Heart right ventricle (tissue), 16 donors: ENCODE measurements at regions of chr2 and their contacts with region 1.

Region 1: GRCh38 chr2:237291138-237291792 is 122.7 kb downstream of the COL6A3 start:
- DNase-seq: peak; percentile 91 to 98
- ATAC-seq: peak; percentile 94 to 98 (median 96)
- H3K4me3 ChIP-seq: peak overlapping the region in 5 of 10 donors; percentile 1 to 24 (median 10)
- H3K27ac ChIP-seq: peak overlapping the region; percentile 71 to 92 (median 82)
- H3K4me1 ChIP-seq: peaks cover 0 to 40% (median 31%) of the 10 kb centered on the region in 9 donors
- H3K27me3 ChIP-seq: no peaks in the 10 kb centered on the region
- CTCF ChIP-seq: no peak

Region 2: GRCh38 chr2:237235383-237236095 is 55.7 kb before region 1 on chr2:
- intact Hi-C with region 1: loop called in 1 of 10 experiments (anchors 1 kb)
- DNase-seq: peak; percentile 25 to 73
- ATAC-seq: peak; percentile 92 to 99 (median 94)
- H3K4me3 ChIP-seq: no peak overlapping the region
- H3K27ac ChIP-seq: peak overlapping the region; percentile 48 to 82 (median 72)
- H3K4me1 ChIP-seq: peaks cover 8 to 47% (median 20%) of the 10 kb centered on the region in 9 donors
- H3K27me3 ChIP-seq: no peaks in the 10 kb centered on the region
- CTCF ChIP-seq: no peak